CD8-positive, alpha-beta T cell (primary cell): ENCODE measurements at regions of chr12 and their contacts with region 1.

Region 1: DNA sequence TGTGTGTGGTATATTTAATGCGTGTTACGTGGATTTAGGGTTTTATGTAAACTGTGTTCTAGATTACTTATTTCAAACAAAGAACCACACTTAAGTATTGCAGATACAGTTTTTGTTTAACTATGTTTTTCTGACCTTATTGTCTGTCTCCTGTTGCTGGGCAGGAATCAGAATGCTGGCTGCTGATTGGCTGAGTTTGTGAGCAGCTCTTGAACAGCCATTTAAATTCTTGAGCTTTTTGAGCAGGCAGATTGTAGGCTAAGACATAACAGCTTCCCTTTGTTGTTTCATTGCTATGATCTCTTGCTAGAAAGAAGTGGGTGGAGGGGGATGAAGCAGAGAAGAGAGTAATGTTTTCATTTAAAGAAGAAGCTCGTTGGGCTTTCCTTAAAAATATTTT is 52.2 kb downstream of the ATF7IP start:
- DNase-seq: peak; percentile 45 to 91 (median 66)
- ATAC-seq: peak; percentile 69
- H3K4me3 ChIP-seq: peak overlapping the region in 1 of 2 experiments; percentile 25
- H3K4me3 Mint-ChIP-seq: peak overlapping the region; percentile 76
- H3K27ac ChIP-seq: peak overlapping the region; percentile 46 to 62
- H3K27ac Mint-ChIP-seq: peak overlapping the region; percentile 89
- H3K4me1 ChIP-seq: peaks cover 55% of the 10 kb centered on the region
- H3K4me1 Mint-ChIP-seq: peaks cover 64% of the 10 kb centered on the region
- H3K27me3 ChIP-seq: no peaks in the 10 kb centered on the region
- H3K27me3 Mint-ChIP-seq: no peaks in the 10 kb centered on the region
- CTCF ChIP-seq: no peak

Region 2: DNA sequence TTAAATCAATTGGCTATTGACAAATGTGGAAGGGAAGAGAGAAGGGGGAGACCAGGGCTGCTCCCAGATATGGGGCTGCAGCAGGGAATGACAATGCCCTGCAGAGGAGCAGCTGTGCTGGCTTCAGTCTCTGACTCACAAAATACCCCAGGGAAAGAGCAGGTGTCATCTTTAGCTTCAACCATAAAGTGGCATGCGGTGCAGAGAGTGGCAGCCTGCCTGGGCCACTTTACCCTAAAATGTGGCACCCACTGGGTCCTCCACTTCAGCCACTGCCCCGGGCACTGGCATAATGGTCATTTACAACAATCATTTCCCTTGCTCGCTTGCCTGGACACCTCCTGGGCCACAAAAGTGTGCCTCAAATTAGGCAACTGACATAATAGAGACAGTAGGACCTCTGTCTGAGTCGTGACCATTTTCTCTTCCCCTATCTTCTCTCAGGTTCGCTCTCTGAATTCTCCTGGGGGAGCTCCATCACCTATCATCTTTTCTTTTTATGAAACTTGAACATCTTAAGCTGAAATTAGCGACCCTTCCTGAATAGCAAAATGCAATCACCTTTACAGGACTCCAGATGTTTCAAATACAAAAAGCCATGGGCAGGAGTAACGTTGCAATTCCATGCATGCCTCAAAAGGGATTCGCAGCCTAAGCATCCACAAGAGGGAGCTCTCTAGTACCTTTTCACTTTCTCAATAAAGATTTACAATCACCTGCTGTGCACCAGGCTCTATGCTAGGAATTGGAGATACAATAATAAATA is 232.1 kb before region 1 on chr12:
- CTCF ChIA-PET with region 1: no interaction called
- POLR2A ChIA-PET with region 1: no interaction called
- intact Hi-C with region 1: loop called in 1 of 2 experiments (anchors 2 kb)
- DNase-seq: peak in 4 of 9 experiments; percentile 11 to 53 (median 27)
- ATAC-seq: no peak
- H3K4me3 ChIP-seq: no peak overlapping the region
- H3K4me3 Mint-ChIP-seq: no peak overlapping the region
- H3K27ac ChIP-seq: no peak overlapping the region
- H3K27ac Mint-ChIP-seq: no peak overlapping the region
- H3K4me1 ChIP-seq: no peaks in the 10 kb centered on the region
- H3K4me1 Mint-ChIP-seq: peaks cover 3% of the 10 kb centered on the region
- H3K27me3 ChIP-seq: no peaks in the 10 kb centered on the region
- H3K27me3 Mint-ChIP-seq: peaks cover 21% of the 10 kb centered on the region
- CTCF ChIP-seq: peak; percentile 59

Region 3: DNA sequence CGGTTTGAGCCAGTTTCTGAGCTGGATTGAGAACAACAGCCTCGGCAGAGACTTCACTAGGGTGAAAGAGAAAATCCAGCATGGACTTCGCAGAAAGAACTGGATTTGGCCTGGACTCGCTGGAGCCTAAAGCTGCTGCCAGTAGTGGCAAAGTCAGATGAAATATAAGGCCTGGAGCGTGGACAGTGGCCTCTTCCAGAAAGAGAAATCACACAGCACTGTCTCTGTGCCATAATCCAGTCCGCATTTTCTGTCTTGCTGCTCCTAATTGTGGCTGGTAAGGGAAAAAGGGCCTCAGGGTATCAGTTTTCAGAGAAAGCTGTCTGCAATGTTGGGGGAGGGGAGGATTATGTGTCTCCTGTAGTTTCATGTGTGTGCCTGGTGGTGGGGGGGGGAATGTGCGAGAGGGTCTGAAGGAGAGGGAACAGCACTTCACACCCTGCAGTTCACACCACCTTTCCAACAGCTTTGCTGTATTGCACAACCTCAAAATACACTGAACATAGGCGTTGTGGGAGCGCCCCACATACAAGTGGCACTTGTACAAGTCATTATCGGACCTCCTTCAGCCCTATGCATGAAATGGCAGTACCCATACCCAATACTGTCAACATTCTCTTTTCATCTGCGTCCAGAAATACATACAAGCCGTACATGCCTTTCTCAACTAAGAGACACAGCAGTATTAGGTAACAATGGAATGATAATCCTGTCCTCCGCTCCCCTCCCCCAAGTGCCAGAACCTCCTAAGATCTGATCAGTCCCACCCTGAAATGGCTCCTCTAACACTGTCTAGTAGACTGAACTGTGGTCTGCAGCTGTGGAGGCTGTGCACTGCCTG is 159.8 kb before region 1 on chr12:
- CTCF ChIA-PET with region 1: interaction called, 7 read pairs
- POLR2A ChIA-PET with region 1: interaction called, 12 read pairs
- intact Hi-C with region 1: loop called (anchors 1 kb)
- DNase-seq: peak; percentile 60 to 91 (median 84)
- ATAC-seq: peak; percentile 45
- H3K4me3 ChIP-seq: peak overlapping the region in 1 of 2 experiments; percentile 17
- H3K4me3 Mint-ChIP-seq: peak overlapping the region; percentile 73
- H3K27ac ChIP-seq: peak overlapping the region; percentile 72 to 87
- H3K27ac Mint-ChIP-seq: peak overlapping the region; percentile 99
- H3K4me1 ChIP-seq: peaks cover 39% of the 10 kb centered on the region
- H3K4me1 Mint-ChIP-seq: peaks cover 55% of the 10 kb centered on the region
- H3K27me3 ChIP-seq: no peaks in the 10 kb centered on the region
- H3K27me3 Mint-ChIP-seq: no peaks in the 10 kb centered on the region
- CTCF ChIP-seq: no peak

Region 4: GRCh38 chr12:14384783-14385638 is 32.7 kb before region 1 on chr12:
- CTCF ChIA-PET with region 1: interaction called, 8 read pairs
- POLR2A ChIA-PET with region 1: interaction called, 7 read pairs
- intact Hi-C with region 1: loop called in 1 of 2 experiments (anchors 1 kb)
- DNase-seq: peak; percentile 23 to 92 (median 57)
- ATAC-seq: peak; percentile 90
- H3K4me3 ChIP-seq: peak overlapping the region; percentile 1 to 48
- H3K4me3 Mint-ChIP-seq: peak overlapping the region; percentile 60
- H3K27ac ChIP-seq: peak overlapping the region; percentile 56 to 59
- H3K27ac Mint-ChIP-seq: peak overlapping the region; percentile 80
- H3K4me1 ChIP-seq: peaks cover 54% of the 10 kb centered on the region
- H3K4me1 Mint-ChIP-seq: peaks cover 69% of the 10 kb centered on the region
- H3K27me3 ChIP-seq: no peaks in the 10 kb centered on the region
- H3K27me3 Mint-ChIP-seq: no peaks in the 10 kb centered on the region
- CTCF ChIP-seq: no peak

Region 5: GRCh38 chr12:14394317-14395073 is 23.2 kb before region 1 on chr12:
- CTCF ChIA-PET with region 1: interaction called, 4 read pairs
- POLR2A ChIA-PET with region 1: interaction called, 8 read pairs
- intact Hi-C with region 1: loop called in 1 of 2 experiments (anchors 1 kb)
- DNase-seq: peak in 5 of 9 experiments; percentile 35 to 89 (median 52)
- ATAC-seq: peak; percentile 61
- H3K4me3 ChIP-seq: peak overlapping the region in 1 of 2 experiments; percentile 19
- H3K4me3 Mint-ChIP-seq: peak overlapping the region; percentile 67
- H3K27ac ChIP-seq: peak overlapping the region; percentile 39 to 75
- H3K27ac Mint-ChIP-seq: peak overlapping the region; percentile 84
- H3K4me1 ChIP-seq: peaks cover 90% of the 10 kb centered on the region
- H3K4me1 Mint-ChIP-seq: peaks cover 83% of the 10 kb centered on the region
- H3K27me3 ChIP-seq: no peaks in the 10 kb centered on the region
- H3K27me3 Mint-ChIP-seq: no peaks in the 10 kb centered on the region
- CTCF ChIP-seq: no peak

Region 6: DNA sequence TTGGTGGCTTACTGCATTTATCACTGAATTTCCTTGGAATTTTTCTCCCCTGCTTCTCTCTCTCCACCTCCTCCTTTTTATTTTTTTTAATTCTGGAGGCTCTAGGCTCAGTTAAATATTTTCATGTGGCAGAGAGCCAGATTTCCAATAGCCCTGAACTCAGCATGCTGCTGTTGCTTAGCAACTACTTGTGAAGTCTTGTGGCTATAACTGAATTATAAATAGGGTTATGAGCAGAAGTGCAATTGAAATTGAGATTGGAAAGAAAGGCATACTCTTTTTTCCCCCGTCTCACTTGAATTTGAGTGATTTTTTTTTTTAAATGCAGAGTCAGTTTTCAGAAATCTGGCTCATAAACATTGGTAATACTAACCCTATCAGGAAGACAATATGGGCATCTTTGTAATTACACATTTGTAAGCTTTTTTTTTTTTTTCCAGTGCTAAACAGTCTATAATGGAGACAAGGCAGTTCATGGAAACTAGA is 14.0 kb before region 1 on chr12:
- CTCF ChIA-PET with region 1: interaction called, 4 read pairs
- POLR2A ChIA-PET with region 1: interaction called, 5 read pairs
- intact Hi-C with region 1: loop called in 1 of 2 experiments (anchors 2 kb)
- DNase-seq: peak in 5 of 9 experiments; percentile 19 to 87 (median 29)
- ATAC-seq: peak; percentile 50
- H3K4me3 ChIP-seq: peak overlapping the region in 1 of 2 experiments; percentile 0
- H3K4me3 Mint-ChIP-seq: peak overlapping the region; percentile 57
- H3K27ac ChIP-seq: peak overlapping the region; percentile 5 to 75
- H3K27ac Mint-ChIP-seq: peak overlapping the region; percentile 81
- H3K4me1 ChIP-seq: peaks cover 75% of the 10 kb centered on the region
- H3K4me1 Mint-ChIP-seq: peaks cover 71% of the 10 kb centered on the region
- H3K27me3 ChIP-seq: no peaks in the 10 kb centered on the region
- H3K27me3 Mint-ChIP-seq: no peaks in the 10 kb centered on the region
- CTCF ChIP-seq: no peak

Region 7: GRCh38 chr12:14854586-14855183 is 437.0 kb after region 1 on chr12:
- CTCF ChIA-PET with region 1: no interaction called
- POLR2A ChIA-PET with region 1: no interaction called
- intact Hi-C with region 1: no loop called
- DNase-seq: no peak
- ATAC-seq: no peak
- H3K4me3 ChIP-seq: no peak overlapping the region
- H3K4me3 Mint-ChIP-seq: no peak overlapping the region
- H3K27ac ChIP-seq: no peak overlapping the region
- H3K27ac Mint-ChIP-seq: no peak overlapping the region
- H3K4me1 ChIP-seq: no peaks in the 10 kb centered on the region
- H3K4me1 Mint-ChIP-seq: no peaks in the 10 kb centered on the region
- H3K27me3 ChIP-seq: no peaks in the 10 kb centered on the region
- H3K27me3 Mint-ChIP-seq: no peaks in the 10 kb centered on the region
- CTCF ChIP-seq: no peak

Region 8: GRCh38 chr12:16285586-16285985 is 1867.9 kb after region 1 on chr12:
- CTCF ChIA-PET with region 1: no interaction called
- POLR2A ChIA-PET with region 1: no interaction called
- intact Hi-C with region 1: no loop called
- DNase-seq: no peak
- ATAC-seq: no peak
- H3K4me3 ChIP-seq: no peak overlapping the region
- H3K4me3 Mint-ChIP-seq: no peak overlapping the region
- H3K27ac ChIP-seq: no peak overlapping the region
- H3K27ac Mint-ChIP-seq: no peak overlapping the region
- H3K4me1 ChIP-seq: no peaks in the 10 kb centered on the region
- H3K4me1 Mint-ChIP-seq: no peaks in the 10 kb centered on the region
- H3K27me3 ChIP-seq: no peaks in the 10 kb centered on the region
- H3K27me3 Mint-ChIP-seq: no peaks in the 10 kb centered on the region
- CTCF ChIP-seq: no peak